Mammary epithelial cell (primary cell): ENCODE measurements at regions of chr4 and their contacts with region 1.

Region 1: GRCh38 chr4:151777471-151777870 is 16.7 kb upstream of the GATB start:
- DNase-seq: no peak
- H3K4me3 ChIP-seq: no peak overlapping the region
- H3K27ac ChIP-seq: no peak overlapping the region
- H3K4me1 ChIP-seq: no peaks in the 10 kb centered on the region
- H3K27me3 ChIP-seq: no peaks in the 10 kb centered on the region
- CTCF ChIP-seq: no peak

Region 2: DNA sequence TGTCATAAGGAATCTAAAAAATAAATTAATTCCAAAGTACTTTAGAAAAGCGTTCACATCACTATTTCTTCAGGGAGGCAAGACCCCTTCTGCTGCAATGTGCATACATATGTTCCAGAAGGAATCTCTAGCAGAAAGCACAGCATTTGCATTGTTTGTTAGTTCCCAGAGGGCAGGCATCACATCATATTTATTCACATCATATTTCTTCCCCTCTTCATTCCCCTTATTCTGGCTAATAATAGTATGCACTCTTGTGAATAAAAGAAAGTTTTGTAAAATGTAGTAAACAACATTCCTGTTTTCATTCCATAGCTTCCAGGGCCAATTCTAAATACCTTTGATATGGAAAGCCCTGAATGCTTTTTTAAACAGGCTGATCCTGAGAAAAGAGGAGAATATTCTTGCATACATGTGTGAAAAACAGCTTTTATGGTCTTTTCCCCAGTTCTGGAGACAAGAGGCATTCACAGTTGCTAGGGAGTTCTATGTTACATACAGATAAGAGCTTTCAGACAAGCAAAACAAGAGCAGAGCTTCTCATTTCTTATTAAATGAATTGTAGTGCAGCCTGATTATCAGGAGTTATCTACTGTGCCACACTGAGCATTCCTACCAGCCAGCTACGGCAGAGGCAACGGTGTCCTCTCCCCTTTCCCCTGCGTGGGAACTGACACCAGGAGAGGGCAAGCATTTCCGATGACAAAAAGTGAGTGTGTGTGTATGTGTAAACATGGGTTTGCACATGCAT is 31.8 kb before region 1 on chr4:
- CTCF ChIA-PET with region 1: no interaction called
- dilution Hi-C with region 1: no loop called
- in situ Hi-C with region 1: no loop called
- intact Hi-C with region 1: no loop called
- DNase-seq: no peak
- H3K4me3 ChIP-seq: no peak overlapping the region
- H3K27ac ChIP-seq: peak overlapping the region; percentile 85
- H3K4me1 ChIP-seq: peaks cover 41% of the 10 kb centered on the region
- H3K27me3 ChIP-seq: no peaks in the 10 kb centered on the region
- CTCF ChIP-seq: no peak

Region 3: GRCh38 chr4:151850791-151851213 is 73.3 kb after region 1 on chr4:
- CTCF ChIA-PET with region 1: no interaction called
- dilution Hi-C with region 1: loop called (anchors 5 kb)
- in situ Hi-C with region 1: no loop called
- intact Hi-C with region 1: no loop called
- DNase-seq: peak; percentile 43
- H3K4me3 ChIP-seq: no peak overlapping the region
- H3K27ac ChIP-seq: no peak overlapping the region
- H3K4me1 ChIP-seq: no peaks in the 10 kb centered on the region
- H3K27me3 ChIP-seq: peaks cover under 1% of the 10 kb centered on the region
- CTCF ChIP-seq: no peak